ENCODE measurements at regions of chr1 and their contacts with region 1.

Region 1: DNA sequence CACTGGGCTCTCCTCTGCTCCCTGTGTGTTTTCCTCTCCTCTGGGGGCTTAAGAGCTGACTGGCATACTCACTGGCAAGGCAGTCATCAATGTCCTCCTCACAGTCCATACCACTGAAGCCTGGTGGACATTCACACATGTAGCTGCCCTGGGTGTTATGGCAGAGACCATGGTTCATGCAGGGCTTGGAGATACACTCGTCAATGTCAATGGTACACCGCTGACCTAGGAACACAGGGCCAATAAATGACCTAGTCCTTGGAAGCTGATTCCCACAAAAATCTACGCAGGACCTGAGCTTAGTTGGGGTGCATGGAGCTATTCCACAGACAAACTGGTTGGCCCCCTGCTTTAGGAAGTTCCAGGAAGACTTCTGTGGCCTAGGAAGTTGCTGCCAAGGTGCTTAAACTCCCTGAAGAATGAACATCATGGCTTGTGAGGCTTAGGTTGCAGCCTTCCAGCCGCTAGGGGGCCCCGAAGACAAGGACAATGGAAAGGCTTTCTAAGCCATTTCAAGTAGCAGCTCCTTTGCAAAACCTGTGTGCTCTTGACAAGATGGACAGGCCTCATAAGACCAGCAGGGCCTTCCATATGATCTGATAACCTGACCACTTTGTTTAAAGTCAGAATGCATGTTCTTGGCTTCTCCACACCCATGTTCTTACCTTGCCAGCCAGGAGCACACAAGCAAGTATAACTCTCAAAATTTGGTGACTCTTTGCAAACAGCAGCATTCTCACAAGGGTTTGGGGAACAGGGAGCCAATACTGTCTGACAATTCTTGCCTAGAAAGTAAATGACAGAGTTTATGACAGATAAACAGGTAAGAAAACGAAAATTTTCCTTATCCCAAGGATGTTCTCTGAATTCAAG is 52.3 kb upstream of the ADAM30 start:
- DNase-seq: peak; percentile 57 to 86
- H3K4me3 ChIP-seq: no peak overlapping the region
- H3K27ac ChIP-seq: no peak overlapping the region
- H3K4me1 ChIP-seq: no peaks in the 10 kb centered on the region
- H3K27me3 ChIP-seq: no peaks in the 10 kb centered on the region
- CTCF ChIP-seq: peak; percentile 72 to 95 (median 89)
- EP300 ChIP-seq: no peak
- POLR2A ChIP-seq: no peak
- RAD21 ChIP-seq: peak; percentile 88 to 93

Region 2: GRCh38 chr1:119859647-119860046 is 88.9 kb before region 1 on chr1:
- CTCF ChIA-PET with region 1: no interaction called
- POLR2A ChIA-PET with region 1: no interaction called
- DNase-seq: no peak
- H3K4me3 ChIP-seq: no peak overlapping the region
- H3K27ac ChIP-seq: no peak overlapping the region
- H3K4me1 ChIP-seq: no peaks in the 10 kb centered on the region
- H3K27me3 ChIP-seq: no peaks in the 10 kb centered on the region
- CTCF ChIP-seq: no peak
- EP300 ChIP-seq: no peak
- POLR2A ChIP-seq: no peak
- RAD21 ChIP-seq: no peak

Region 3: GRCh38 chr1:119937198-119937597 is 11.4 kb before region 1 on chr1:
- CTCF ChIA-PET with region 1: interaction called, 24 read pairs
- POLR2A ChIA-PET with region 1: no interaction called
- DNase-seq: no peak
- H3K4me3 ChIP-seq: no peak overlapping the region
- H3K27ac ChIP-seq: no peak overlapping the region
- H3K4me1 ChIP-seq: peaks cover 0 to 3% (median 0%) of the 10 kb centered on the region in 4 experiments; a peak in 1 of 7 replicates
- H3K27me3 ChIP-seq: no peaks in the 10 kb centered on the region
- CTCF ChIP-seq: no peak
- EP300 ChIP-seq: no peak
- POLR2A ChIP-seq: no peak
- RAD21 ChIP-seq: no peak

Measured in H1 (cell line).